ENCODE measurements at regions of chr21 and their contacts with region 1.

Region 1: DNA sequence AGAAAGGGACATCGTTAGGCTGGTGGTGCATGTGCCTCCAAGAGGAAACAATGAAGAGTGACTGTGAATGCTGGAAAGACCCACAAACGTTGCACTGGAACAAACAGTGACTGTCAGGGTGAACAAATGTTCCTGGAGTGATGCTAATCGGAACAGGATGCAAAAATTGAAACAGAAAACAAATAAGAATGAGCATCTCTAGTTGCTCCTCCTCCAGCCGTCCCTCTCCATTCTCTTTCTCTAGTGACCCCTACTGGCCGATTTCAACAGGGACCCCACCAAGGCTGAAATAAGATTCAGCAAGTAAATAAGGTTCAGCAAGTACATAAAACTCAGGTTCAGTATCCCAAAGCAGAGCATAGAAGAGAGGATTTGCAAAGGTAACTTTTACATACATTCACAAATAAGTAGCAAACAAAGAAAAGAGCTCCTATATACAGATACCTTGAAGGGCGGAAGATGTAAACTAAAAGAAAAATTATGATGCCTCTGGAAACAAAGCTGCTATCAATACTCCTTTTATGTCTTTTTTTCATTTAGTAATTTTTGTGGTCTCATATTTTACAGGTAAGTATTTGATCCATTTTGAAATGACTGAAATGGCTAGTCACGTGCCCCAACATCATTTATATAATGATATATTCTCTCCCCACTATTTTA is 836.1 kb upstream of the ADAMTS5 start:
- H3K4me3 ChIP-seq: no peak overlapping the region
- H3K27ac ChIP-seq: no peak overlapping the region
- H3K4me1 ChIP-seq: no peaks in the 10 kb centered on the region
- CTCF ChIP-seq: no peak

Region 2: GRCh38 chr21:27813750-27814149 is 10.8 kb after region 1 on chr21:
- CTCF ChIA-PET with region 1: interaction called, 14 read pairs
- POLR2A ChIA-PET with region 1: no interaction called
- H3K4me3 ChIP-seq: no peak overlapping the region
- H3K27ac ChIP-seq: no peak overlapping the region
- H3K4me1 ChIP-seq: no peaks in the 10 kb centered on the region
- CTCF ChIP-seq: no peak

Region 3: DNA sequence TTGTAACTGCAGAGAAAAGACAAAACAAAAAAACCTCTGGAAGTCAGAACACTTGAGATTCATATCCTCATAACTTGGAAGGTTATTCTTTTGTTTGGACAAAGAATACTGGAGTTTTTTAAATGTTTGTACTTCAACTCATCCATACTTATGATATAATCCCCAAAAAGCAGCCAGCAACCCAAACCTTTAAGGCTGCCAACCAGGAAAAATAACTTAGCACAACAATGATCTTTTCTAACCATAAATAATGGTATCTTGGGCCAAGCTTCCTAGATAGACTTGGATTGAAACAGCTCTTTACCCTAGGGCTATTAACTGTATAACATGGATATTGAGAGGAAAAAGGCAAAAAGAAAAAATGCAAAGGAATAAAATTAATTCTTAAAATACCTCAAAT is 854.6 kb after region 1 on chr21:
- CTCF ChIA-PET with region 1: no interaction called
- POLR2A ChIA-PET with region 1: no interaction called
- H3K4me3 ChIP-seq: no peak overlapping the region
- H3K27ac ChIP-seq: no peak overlapping the region
- H3K4me1 ChIP-seq: no peaks in the 10 kb centered on the region
- CTCF ChIP-seq: no peak